ENCODE measurements at regions of chr20 and their contacts with region 1.

Region 1: DNA sequence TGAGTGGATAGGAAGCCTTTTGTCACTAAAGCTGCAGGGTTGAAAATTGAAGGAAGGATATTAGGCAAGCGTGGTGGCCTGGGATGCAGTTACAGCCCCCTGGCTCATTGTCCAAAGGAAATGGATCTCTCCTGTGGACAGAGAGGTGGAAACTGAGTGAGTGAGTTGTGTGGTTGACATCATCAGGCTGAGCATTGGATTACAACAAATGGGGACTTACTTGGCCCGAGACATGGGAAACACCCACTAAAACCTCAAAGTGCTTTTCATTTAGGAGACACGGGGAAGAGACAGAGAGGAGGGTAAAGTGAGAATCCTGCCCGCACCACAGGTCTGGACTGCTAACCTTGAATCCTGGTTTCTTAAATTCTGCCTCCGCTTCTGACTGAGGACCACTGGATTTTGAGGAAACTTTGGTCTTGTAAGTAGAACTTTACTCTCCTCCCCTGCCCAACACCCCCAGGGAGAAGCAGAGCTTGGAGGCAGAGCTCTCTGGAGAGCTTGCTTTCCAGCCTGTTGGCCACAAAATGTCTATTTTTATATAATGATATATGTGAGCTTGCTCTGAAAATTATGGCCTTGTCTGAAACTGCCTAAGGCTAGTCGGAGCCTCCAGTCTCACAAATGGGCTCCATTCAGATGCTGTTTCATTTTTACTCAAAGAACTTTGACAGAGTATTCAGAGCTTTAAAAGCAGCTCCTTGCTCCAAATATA is at the start of gene PKIG:
- DNase-seq: no peak
- ATAC-seq: peak; percentile 64 to 68
- H3K4me3 ChIP-seq: peak within 1 kb of the TSS; percentile 53
- H3K27ac ChIP-seq: peak within 1 kb of the TSS; percentile 81
- H3K4me1 ChIP-seq: peaks cover 59% of the 10 kb centered on the region
- H3K27me3 ChIP-seq: no peaks in the 10 kb centered on the region
- CTCF ChIP-seq: no peak
- total RNA-seq, gene PKIG: 61.6 TPM

Region 2: GRCh38 chr20:44521484-44522481 is 60.7 kb before region 1 on chr20 and contains the start of gene SERINC3:
- intact Hi-C with region 1: loop called (anchors 10 kb)
- DNase-seq: peak; percentile 97
- ATAC-seq: peak; percentile 100
- H3K4me3 ChIP-seq: peak within 1 kb of the TSS; percentile 99
- H3K27ac ChIP-seq: peak within 1 kb of the TSS; percentile 100
- H3K4me1 ChIP-seq: peaks cover 49% of the 10 kb centered on the region
- H3K27me3 ChIP-seq: no peaks in the 10 kb centered on the region
- CTCF ChIP-seq: no peak
- total RNA-seq, gene SERINC3: 133 TPM

Region 3: GRCh38 chr20:45282700-45283547 is 700.5 kb after region 1 on chr20:
- intact Hi-C with region 1: no loop called
- DNase-seq: no peak
- ATAC-seq: no peak
- H3K4me3 ChIP-seq: no peak overlapping the region
- H3K27ac ChIP-seq: no peak overlapping the region
- H3K4me1 ChIP-seq: no peaks in the 10 kb centered on the region
- H3K27me3 ChIP-seq: no peaks in the 10 kb centered on the region
- CTCF ChIP-seq: no peak

Measured in lower lobe of right lung (tissue), 2 donors.